ENCODE measurements at regions of chr9 and their contacts with region 1.

Region 1: GRCh38 chr9:95167998-95168397 is 149.5 kb downstream of the FANCC start:
- DNase-seq: peak; percentile 77
- ATAC-seq: peak; percentile 58
- H3K4me3 Mint-ChIP-seq: no peak overlapping the region
- H3K27ac Mint-ChIP-seq: peak overlapping the region; percentile 37
- H3K4me1 Mint-ChIP-seq: peaks cover 9% of the 10 kb centered on the region
- H3K27me3 Mint-ChIP-seq: no peaks in the 10 kb centered on the region

Region 2: GRCh38 chr9:94681508-94681907 is 486.5 kb before region 1 on chr9:
- CTCF ChIA-PET with region 1: interaction called, 20 read pairs
- POLR2A ChIA-PET with region 1: no interaction called
- DNase-seq: peak; percentile 62
- ATAC-seq: peak; percentile 77
- H3K4me3 Mint-ChIP-seq: no peak overlapping the region
- H3K27ac Mint-ChIP-seq: no peak overlapping the region
- H3K4me1 Mint-ChIP-seq: no peaks in the 10 kb centered on the region
- H3K27me3 Mint-ChIP-seq: peaks cover 30% of the 10 kb centered on the region

Region 3: GRCh38 chr9:95048225-95049087 is 119.5 kb before region 1 on chr9:
- CTCF ChIA-PET with region 1: no interaction called
- POLR2A ChIA-PET with region 1: no interaction called
- DNase-seq: peak; percentile 44
- ATAC-seq: peak; percentile 89
- H3K4me3 Mint-ChIP-seq: peak overlapping the region; percentile 74
- H3K27ac Mint-ChIP-seq: no peak overlapping the region
- H3K4me1 Mint-ChIP-seq: peaks cover 9% of the 10 kb centered on the region
- H3K27me3 Mint-ChIP-seq: peaks cover 34% of the 10 kb centered on the region

Region 4: DNA sequence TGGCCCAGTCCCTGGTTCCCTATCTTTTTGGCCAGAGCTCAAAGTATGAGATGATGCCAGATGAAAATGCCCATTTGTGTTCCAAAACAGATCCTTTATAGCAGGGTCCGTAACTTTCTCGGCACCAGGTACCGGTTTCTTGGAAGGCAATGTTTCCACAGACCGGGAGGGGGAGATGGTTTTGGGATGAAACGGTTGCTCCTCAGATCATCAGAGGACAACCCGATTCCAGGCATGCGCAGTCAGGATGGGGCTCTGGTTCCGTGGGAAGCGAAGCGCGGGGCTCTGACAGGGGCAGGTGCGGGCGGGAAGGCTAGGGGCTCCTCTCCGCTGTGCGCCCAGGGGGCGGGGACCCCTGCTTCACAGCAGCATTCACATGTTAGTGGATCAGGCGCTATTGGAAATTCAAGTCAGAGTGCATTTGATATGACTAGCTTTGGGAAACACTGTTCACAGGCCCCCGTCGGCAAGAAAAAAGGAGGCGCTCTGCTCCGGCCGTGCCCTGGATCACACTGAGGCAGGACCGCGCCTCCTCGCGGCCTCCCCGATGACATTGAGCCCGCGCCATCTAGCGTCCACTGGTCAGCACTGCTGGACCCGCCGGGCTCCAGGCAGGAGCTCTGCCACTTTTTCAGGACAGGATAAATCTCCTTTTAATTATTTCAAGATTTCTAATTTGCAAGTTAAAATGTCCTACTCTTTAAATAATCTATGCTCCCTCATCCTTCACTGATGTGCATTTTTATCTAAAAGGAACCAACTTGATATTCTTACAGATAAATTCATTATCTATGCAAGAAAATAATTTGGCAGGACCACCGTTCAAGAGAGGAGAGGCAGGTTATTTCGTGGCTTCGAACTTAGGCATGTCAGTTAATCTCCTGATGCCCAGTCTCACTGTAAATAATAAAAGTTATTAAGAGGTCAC is 40.5 kb before region 1 on chr9:
- CTCF ChIA-PET with region 1: interaction called, 22 read pairs
- POLR2A ChIA-PET with region 1: no interaction called
- DNase-seq: peak; percentile 79
- ATAC-seq: peak; percentile 96
- H3K4me3 Mint-ChIP-seq: no peak overlapping the region
- H3K27ac Mint-ChIP-seq: no peak overlapping the region
- H3K4me1 Mint-ChIP-seq: no peaks in the 10 kb centered on the region
- H3K27me3 Mint-ChIP-seq: no peaks in the 10 kb centered on the region

Region 5: DNA sequence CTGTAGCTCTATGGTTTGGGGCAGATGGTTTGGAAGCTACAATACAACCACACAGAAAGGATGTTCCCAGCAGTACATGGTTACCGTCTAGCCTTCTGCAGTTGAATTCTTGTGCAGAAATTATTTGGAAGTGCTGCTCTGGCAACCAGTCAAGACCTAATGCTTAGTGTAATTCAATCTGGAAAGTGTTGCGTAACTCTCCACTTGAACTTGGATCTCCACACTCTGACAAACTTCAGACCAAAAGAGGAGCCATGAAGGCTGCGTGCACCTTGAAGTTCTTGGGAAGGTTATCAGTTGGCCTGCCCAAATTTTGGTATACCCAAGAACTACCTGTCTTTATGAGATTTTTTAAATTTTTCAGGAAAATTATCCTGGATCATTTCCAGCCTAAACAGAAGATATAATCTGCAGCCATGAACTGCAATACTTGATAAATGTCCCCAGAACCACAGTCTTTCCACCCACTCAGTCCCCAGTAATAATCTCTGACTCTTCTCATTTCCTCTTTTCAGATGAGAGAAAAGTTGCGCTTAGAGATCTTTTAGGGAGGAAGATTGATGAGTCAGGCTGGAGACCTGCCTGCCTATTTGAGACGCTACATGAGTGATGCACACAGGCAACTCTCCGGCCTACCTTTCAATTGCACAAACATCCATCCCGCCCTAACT is 10.4 kb before region 1 on chr9:
- CTCF ChIA-PET with region 1: interaction called, 23 read pairs
- POLR2A ChIA-PET with region 1: no interaction called
- DNase-seq: no peak
- ATAC-seq: no peak
- H3K4me3 Mint-ChIP-seq: no peak overlapping the region
- H3K27ac Mint-ChIP-seq: no peak overlapping the region
- H3K4me1 Mint-ChIP-seq: no peaks in the 10 kb centered on the region
- H3K27me3 Mint-ChIP-seq: no peaks in the 10 kb centered on the region

Region 6: DNA sequence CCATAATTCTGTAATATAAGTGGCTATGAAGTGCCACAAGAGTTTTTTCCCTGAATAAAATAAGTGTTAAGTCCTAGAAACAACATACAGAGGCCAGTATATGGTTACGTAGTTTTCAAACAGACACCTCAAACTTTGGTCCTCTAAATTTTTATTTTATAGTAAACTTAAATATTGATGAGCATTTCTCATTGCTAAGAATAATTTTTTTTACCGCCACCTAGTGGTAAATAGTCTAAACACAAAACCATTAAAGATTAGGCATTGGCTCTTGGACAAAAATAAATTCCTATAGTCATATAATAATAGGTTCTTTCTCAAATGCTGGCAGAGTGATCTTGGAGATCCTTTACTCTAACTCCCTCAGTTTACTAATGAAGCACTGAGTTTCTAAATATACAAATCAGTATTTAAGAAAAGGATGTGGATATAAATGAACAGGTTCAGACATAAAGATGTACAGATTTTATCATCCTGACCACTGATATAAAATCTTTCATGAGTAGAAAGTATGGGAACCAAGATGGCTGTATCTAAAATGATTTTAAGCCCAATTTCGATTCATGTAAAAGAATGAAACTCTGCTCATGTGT is 13.3 kb after region 1 on chr9:
- CTCF ChIA-PET with region 1: interaction called, 22 read pairs
- POLR2A ChIA-PET with region 1: no interaction called
- DNase-seq: no peak
- ATAC-seq: no peak
- H3K4me3 Mint-ChIP-seq: no peak overlapping the region
- H3K27ac Mint-ChIP-seq: no peak overlapping the region
- H3K4me1 Mint-ChIP-seq: no peaks in the 10 kb centered on the region
- H3K27me3 Mint-ChIP-seq: no peaks in the 10 kb centered on the region

Region 7: DNA sequence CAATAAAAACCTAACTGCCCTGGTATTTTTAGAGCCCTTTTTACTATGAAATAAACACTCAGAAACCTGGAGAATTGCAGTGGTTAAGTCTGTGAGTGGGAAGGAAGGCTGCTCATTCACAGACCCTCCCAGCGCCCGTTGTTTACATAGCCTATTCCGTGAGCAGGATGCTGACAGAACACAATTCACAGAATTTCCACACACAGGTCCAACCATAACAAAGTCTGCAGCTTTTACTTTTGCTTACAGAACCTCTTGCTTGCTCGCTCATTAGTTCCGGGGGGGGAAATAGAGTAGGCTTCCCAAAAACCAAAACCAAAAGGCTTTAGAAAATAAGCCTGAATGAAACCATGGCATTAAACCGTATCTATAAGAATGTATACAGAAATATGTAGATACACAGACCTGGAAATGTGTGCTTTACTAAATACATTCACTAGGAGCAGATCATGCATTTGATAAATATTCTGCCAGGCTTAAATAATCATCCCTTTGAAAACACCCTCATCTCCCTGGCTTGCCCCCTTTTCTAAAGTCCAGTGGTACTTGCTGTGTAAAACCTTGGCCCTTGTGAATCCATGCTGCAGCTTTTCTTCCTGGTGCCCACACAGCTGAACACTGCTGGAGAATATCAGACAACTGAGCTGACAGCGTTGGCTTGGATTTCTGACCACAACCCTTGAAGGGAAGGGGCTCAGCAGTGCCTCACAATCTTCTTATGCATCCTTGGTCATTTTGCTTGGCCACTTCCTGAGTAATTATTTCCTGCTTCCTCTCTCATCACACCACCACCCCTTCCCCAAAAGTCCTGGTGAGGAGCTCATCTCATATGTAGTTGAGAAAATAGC is 21.5 kb after region 1 on chr9:
- CTCF ChIA-PET with region 1: interaction called, 15 read pairs
- POLR2A ChIA-PET with region 1: interaction called, 3 read pairs
- DNase-seq: peak; percentile 51
- ATAC-seq: peak; percentile 77
- H3K4me3 Mint-ChIP-seq: peak overlapping the region; percentile 50
- H3K27ac Mint-ChIP-seq: peak overlapping the region; percentile 73
- H3K4me1 Mint-ChIP-seq: peaks cover 35% of the 10 kb centered on the region
- H3K27me3 Mint-ChIP-seq: no peaks in the 10 kb centered on the region